ENCODE measurements at regions of chr3 and their contacts with region 1.

Region 1: DNA sequence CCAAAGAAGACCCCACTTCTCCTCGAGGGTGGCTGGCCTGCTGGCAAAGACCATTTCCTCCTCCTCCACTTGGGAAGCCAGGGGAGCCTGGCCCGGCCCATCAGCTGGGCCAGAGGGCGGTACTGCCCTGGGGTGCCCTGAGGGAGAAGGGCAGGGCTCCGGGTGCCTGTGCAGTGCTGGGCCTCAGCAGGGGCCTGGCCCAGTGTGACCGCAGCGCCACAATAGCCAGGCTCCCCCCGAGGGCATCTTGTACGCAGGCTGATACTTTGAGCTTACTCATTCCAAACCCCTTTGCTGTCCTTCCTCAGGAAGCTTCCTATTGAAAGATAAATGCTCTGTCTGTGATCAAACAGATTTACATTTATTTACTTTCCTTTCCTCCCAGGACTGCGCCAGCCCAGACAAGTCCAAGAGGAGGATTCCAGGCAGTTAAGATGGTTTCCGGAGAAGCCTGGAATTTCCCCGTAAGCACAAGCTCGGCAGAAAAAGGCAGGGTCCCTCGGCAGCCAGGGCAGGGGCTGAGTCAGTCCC is 240.1 kb downstream of the XXYLT1 start:
- DNase-seq: no peak
- H3K4me3 ChIP-seq: peak overlapping the region in 1 of 3 donors; percentile 3
- H3K27ac ChIP-seq: peak overlapping the region; percentile 69 to 87
- H3K4me1 ChIP-seq: peaks cover 0 to 5% of the 10 kb centered on the region in 2 donors
- H3K27me3 ChIP-seq: no peaks in the 10 kb centered on the region
- CTCF ChIP-seq: no peak
- POLR2A ChIP-seq: no peak

Region 2: GRCh38 chr3:195042735-195043606 is 12.1 kb after region 1 on chr3:
- intact Hi-C with region 1: no loop called
- DNase-seq: no peak
- H3K4me3 ChIP-seq: no peak overlapping the region
- H3K27ac ChIP-seq: no peak overlapping the region
- H3K4me1 ChIP-seq: no peaks in the 10 kb centered on the region
- H3K27me3 ChIP-seq: no peaks in the 10 kb centered on the region
- CTCF ChIP-seq: no peak
- POLR2A ChIP-seq: no peak

Region 3: GRCh38 chr3:195271116-195271858 is 240.4 kb after region 1 on chr3 and contains the start of gene XXYLT1:
- intact Hi-C with region 1: loop called (anchors 5 kb)
- DNase-seq: peak; percentile 63 to 83
- H3K4me3 ChIP-seq: peak within 1 kb of the TSS; percentile 63 to 95 (median 72)
- H3K27ac ChIP-seq: peak within 1 kb of the TSS; percentile 14 to 70
- H3K4me1 ChIP-seq: peaks cover 0 to 8% of the 10 kb centered on the region in 2 donors
- H3K27me3 ChIP-seq: no peaks in the 10 kb centered on the region
- CTCF ChIP-seq: peak; percentile 55 to 97 (median 91)
- POLR2A ChIP-seq: no peak
- total RNA-seq, gene XXYLT1: 7.2 to 13.0 (median 10.8) TPM

Measured in breast epithelium (tissue), 4 donors.